Activated naive CD4-positive, alpha-beta T cell treated with anti-CD3 and anti-CD28 coated beads, Interleukin-2, amount 10 ng/mL, durations not matched to agents 7 days and 5 days (primary cell): ENCODE measurements at regions of chr1 and their contacts with region 1.

Region 1: DNA sequence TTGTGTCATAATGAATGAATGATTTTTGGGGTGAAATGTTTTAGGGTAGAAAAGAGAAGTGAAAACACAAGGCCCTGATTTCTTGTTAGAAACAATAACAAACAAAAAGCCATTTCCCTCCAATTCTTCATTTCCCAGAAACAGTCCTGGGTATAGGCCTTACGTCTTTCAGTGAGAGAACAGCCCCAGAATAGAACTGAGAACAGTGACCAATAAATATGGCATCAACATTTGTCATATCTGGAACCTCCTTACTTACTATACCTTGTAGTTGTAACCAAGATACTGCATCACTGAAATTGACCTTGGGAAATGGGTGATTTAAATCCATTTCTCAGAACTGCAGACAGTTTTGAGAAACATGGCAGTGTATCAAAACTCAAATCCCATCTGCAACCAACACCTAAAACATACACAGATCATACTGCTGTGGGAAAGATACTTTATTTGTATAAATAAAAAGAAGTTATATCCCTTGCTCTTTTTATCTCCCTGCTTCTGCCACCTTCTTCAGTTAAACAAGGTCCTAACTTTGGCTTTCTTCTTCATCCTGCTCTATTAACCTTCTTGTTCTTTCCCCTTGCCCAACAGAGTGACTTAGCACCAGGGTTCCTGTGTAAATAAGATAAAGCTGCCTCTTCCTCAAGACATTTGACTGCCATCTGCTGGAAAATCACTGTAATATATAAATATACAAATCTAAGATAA is 19.5 kb downstream of the XKR8 start:
- DNase-seq: no peak
- H3K4me3 Mint-ChIP-seq: no peak overlapping the region
- H3K27ac Mint-ChIP-seq: no peak overlapping the region
- H3K4me1 Mint-ChIP-seq: peaks cover 2% of the 10 kb centered on the region
- H3K27me3 Mint-ChIP-seq: no peaks in the 10 kb centered on the region

Region 2: DNA sequence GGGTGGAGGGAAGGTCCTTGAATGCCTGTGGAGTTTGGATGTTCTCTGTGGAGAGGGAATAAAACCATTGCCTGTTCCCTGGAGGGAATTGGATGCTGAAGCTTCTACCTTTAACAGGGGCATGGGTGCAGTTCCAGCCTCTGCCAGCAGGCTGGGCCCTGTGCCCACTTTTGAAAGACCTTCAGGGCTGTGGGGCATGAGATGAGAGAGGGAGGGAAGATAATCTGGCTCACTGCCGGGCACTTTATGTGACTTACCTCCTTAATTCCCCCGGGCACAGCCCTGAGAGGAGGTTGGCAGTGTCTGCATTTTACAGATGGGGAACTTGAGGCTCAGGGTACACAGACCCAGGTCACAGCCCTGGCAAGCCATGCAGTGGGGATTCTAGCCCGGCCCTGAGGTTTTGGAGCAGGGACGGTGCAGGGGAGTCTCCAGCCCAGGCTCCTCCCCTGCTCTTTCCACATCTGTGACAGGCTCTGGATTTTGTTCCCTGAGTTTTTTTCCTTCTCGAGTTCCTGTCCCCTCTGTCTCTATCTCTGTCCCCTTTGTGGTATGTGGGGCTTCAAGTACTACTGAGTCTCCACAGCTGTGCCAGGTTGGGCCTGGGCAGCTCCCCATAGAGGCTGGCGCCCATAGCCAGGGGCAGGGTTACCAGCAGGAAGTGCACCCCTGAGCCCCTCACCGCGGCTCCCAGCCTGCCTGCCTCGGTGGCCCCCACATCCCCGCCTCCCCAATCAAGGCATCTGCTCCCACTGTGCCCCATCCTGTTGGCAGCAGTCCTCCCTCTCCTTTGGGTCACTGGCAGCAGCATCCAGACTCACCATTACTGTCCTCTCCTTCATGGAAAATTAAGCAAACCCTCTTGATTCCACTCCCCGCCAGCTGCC is 121.0 kb before region 1 on chr1:
- CTCF ChIA-PET with region 1: interaction called, 23 read pairs
- DNase-seq: peak; percentile 90
- H3K4me3 Mint-ChIP-seq: no peak overlapping the region
- H3K27ac Mint-ChIP-seq: peak overlapping the region; percentile 82
- H3K4me1 Mint-ChIP-seq: peaks cover 18% of the 10 kb centered on the region
- H3K27me3 Mint-ChIP-seq: peaks cover 4% of the 10 kb centered on the region

Region 3: GRCh38 chr1:27906759-27907158 is 72.5 kb before region 1 on chr1:
- CTCF ChIA-PET with region 1: no interaction called
- DNase-seq: no peak
- H3K4me3 Mint-ChIP-seq: no peak overlapping the region
- H3K27ac Mint-ChIP-seq: no peak overlapping the region
- H3K4me1 Mint-ChIP-seq: peaks cover 8% of the 10 kb centered on the region
- H3K27me3 Mint-ChIP-seq: no peaks in the 10 kb centered on the region

Region 4: GRCh38 chr1:27940297-27940696 is 39.0 kb before region 1 on chr1:
- CTCF ChIA-PET with region 1: interaction called, 35 read pairs
- DNase-seq: peak; percentile 84
- H3K4me3 Mint-ChIP-seq: no peak overlapping the region
- H3K27ac Mint-ChIP-seq: no peak overlapping the region
- H3K4me1 Mint-ChIP-seq: peaks cover 63% of the 10 kb centered on the region
- H3K27me3 Mint-ChIP-seq: peaks cover 25% of the 10 kb centered on the region

Region 5: GRCh38 chr1:27958513-27959399 is 20.5 kb before region 1 on chr1:
- CTCF ChIA-PET with region 1: no interaction called
- DNase-seq: no peak
- H3K4me3 Mint-ChIP-seq: peak overlapping the region; percentile 79
- H3K27ac Mint-ChIP-seq: peak overlapping the region; percentile 28
- H3K4me1 Mint-ChIP-seq: peaks cover 33% of the 10 kb centered on the region
- H3K27me3 Mint-ChIP-seq: peaks cover 33% of the 10 kb centered on the region

Region 6: GRCh38 chr1:27999055-27999454 is 19.8 kb after region 1 on chr1:
- CTCF ChIA-PET with region 1: no interaction called
- DNase-seq: no peak
- H3K4me3 Mint-ChIP-seq: no peak overlapping the region
- H3K27ac Mint-ChIP-seq: no peak overlapping the region
- H3K4me1 Mint-ChIP-seq: peaks cover 12% of the 10 kb centered on the region
- H3K27me3 Mint-ChIP-seq: no peaks in the 10 kb centered on the region